Right ventricle myocardium superior (tissue), 1 donor: ENCODE measurements at regions of chr13 and their contacts with region 1.

Region 1: GRCh38 chr13:39263033-39263432 is 224.8 kb downstream of the NHLRC3 start:
- DNase-seq: no peak
- ATAC-seq: peak; percentile 84

Region 2: DNA sequence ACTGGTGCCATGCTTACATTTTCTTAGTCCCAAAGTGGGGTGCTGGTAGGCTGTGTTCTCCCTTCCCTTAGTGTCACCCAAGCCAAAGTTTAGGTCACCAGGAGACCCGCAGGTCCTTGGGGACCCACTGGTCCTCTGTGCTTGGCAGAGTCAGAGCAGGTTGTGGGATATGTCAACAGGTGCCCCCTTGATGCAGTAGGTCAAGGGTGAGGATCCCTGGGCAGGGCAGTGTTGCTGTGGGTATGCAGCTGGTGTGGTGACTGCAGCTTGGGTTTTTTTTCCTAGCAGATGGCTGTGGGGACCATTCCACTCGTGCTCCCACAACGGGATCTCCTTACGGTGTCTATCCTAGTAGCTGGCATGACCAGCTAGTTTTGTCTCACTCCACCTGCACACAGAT is 201.0 kb before region 1 on chr13:
- intact Hi-C with region 1: loop called (anchors 10 kb)
- DNase-seq: no peak
- ATAC-seq: no peak

Region 3: GRCh38 chr13:39144941-39145533 is 118.0 kb before region 1 on chr13:
- intact Hi-C with region 1: loop called (anchors 2 kb)
- DNase-seq: peak; percentile 45
- ATAC-seq: peak; percentile 80

Region 4: GRCh38 chr13:39244561-39245230 is 18.3 kb before region 1 on chr13:
- intact Hi-C with region 1: no loop called
- DNase-seq: no peak
- ATAC-seq: no peak

Region 5: DNA sequence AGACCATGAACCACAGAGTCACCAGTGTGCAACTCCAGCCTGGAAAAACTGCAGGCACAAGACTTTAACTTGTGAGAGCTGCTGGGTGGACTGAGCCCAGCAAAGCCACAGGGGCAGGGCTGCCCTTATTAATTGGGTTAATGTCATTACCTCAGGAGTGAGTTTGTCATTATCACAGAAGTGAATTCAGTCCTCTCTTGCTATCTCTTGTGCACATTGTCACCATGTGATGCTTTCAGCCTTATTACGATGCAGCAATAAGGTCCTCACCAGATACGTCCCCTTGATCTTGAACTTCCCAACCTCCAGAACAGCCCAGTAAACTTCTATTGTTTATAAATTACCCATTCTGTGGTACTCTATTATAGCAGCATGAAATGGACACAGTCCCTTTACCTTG is 181.8 kb after region 1 on chr13:
- intact Hi-C with region 1: no loop called
- DNase-seq: no peak
- ATAC-seq: no peak

Region 6: GRCh38 chr13:39612023-39612637 is 349.1 kb after region 1 on chr13:
- intact Hi-C with region 1: loop called (anchors 5 kb)
- DNase-seq: peak; percentile 48
- ATAC-seq: peak; percentile 76